CD8-positive, alpha-beta T cell (primary cell): ENCODE measurements at regions of chr9 and their contacts with region 1.

Region 1: DNA sequence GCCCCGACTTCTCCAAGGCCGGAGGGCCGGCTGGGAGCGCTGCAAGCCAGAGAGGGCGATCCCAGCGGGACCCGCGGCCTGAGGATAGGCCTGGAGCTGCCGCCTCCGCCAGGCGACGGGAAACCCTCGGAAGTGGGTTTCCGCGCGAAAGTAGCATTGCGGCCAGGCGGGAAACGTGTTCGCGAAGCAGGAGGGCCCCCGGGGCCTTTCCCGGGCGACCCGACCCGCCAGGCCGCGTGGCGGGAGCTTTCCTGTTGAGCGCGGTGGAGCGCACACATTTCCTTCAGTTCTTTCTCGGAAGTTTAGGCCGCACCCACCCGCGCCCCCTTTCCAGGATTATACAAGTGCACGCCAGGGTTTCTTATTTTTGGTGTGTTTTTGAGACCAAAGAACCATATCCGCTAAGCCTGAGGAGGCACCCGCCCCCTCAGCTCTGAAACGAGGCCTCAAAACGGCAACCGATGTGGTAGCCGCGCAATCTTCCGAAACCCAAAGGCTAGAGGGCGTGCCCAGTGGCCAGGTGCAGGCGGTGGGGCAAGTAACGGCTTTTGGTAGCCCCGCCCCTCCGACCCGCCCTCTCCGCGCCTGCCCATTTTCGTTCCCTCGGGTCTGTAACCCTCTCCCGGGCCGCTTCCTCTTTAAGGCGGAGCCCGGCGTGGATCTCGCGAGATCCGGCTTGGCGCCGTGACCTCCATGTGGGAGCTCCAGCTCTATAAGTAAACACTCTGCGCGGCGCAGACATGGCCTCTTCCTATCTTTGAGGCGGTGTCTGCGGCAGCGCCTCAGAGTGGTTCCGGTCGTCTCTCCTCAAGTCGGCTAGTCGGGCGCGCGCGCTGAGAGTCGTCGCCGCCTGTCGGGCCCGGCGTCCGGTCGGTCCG is at the start of gene UHRF2:
- DNase-seq: peak; percentile 98 to 99 (median 99)
- ATAC-seq: peak; percentile 88
- H3K4me3 ChIP-seq: peak within 1 kb of the TSS; percentile 58 to 74
- H3K4me3 Mint-ChIP-seq: peak within 1 kb of the TSS; percentile 87
- H3K27ac ChIP-seq: peak within 1 kb of the TSS; percentile 80 to 83
- H3K27ac Mint-ChIP-seq: peak within 1 kb of the TSS; percentile 93
- H3K4me1 ChIP-seq: peaks cover 28% of the 10 kb centered on the region
- H3K4me1 Mint-ChIP-seq: peaks cover 34% of the 10 kb centered on the region
- H3K27me3 ChIP-seq: no peaks in the 10 kb centered on the region
- H3K27me3 Mint-ChIP-seq: no peaks in the 10 kb centered on the region
- CTCF ChIP-seq: no peak
- total RNA-seq, gene UHRF2: 140 to 159 TPM

Region 2: DNA sequence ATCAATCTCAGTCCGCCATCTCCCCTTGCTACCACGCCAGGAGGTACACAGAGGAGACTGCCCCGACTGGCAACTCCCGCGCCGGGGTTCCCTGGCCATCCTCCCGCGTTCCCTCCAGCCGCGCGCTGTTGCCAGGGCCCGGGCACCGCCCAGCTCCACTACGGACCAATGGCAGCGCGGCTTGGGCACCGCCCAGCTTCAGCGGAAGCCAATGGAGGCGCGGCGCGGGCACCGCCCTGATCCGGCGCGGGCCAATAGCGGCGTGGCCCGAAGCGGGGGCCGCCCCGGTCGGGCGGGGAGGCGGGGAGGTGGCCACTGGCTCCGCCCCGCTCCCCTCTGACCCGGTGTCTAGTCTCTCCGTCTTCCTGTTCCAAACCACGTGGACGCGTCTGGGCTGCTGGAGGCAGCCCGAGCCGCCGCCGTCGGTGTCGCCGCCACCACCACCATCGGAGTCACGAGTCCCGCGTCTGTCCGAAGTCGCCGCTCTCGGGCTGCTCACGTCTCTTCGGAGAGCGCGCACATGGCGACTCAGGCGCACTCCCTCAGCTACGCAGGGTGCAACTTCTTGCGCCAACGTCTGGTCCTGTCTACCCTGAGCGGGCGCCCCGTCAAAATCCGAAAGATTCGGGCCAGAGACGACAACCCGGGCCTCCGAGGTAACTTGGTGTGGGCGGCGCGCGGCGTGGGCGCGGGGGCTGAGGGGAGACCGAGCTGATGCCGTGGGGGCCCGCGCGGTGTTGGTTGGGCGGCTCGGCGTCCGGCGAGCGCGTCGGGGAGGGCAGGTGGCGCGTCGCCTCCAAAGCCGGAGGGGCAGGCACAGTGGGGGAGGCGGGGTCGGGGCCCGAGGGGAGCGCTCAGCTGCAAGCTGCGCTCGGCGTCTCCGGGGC is 1619.9 kb before region 1 on chr9 and contains the start of gene RCL1:
- CTCF ChIA-PET with region 1: no interaction called
- POLR2A ChIA-PET with region 1: interaction called, 3 read pairs
- intact Hi-C with region 1: loop called in 1 of 2 experiments (anchors 5 kb)
- DNase-seq: peak; percentile 92 to 98 (median 95)
- ATAC-seq: peak; percentile 90
- H3K4me3 ChIP-seq: peak within 1 kb of the TSS; percentile 92 to 98
- H3K4me3 Mint-ChIP-seq: peak within 1 kb of the TSS; percentile 95
- H3K27ac ChIP-seq: peak within 1 kb of the TSS; percentile 90 to 92
- H3K27ac Mint-ChIP-seq: peak within 1 kb of the TSS; percentile 96
- H3K4me1 ChIP-seq: peaks cover 30% of the 10 kb centered on the region
- H3K4me1 Mint-ChIP-seq: peaks cover 47% of the 10 kb centered on the region
- H3K27me3 ChIP-seq: no peaks in the 10 kb centered on the region
- H3K27me3 Mint-ChIP-seq: no peaks in the 10 kb centered on the region
- CTCF ChIP-seq: no peak
- total RNA-seq, gene RCL1: 30.8 to 35.0 TPM

Region 3: DNA sequence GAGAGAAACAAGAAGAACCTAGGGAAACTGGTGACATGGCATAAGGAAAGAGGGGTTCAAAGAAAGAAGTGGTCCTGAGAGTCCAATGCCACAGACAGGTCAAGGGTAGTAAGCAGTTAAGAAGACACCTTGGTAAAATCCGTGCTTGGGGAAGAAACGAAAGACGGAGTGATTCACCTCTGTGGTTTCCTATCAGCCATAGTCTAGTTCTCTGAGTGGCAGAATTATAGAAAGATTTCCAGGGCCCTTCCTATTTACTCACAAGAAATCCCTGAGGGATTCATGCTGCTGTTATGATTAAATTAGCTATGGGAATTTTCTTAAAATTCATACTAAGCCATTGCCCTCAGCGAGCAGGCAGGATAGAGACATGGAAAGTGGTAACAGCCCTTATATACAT is 165.5 kb before region 1 on chr9:
- CTCF ChIA-PET with region 1: no interaction called
- POLR2A ChIA-PET with region 1: no interaction called
- intact Hi-C with region 1: no loop called
- DNase-seq: no peak
- ATAC-seq: no peak
- H3K4me3 ChIP-seq: no peak overlapping the region
- H3K4me3 Mint-ChIP-seq: no peak overlapping the region
- H3K27ac ChIP-seq: no peak overlapping the region
- H3K27ac Mint-ChIP-seq: no peak overlapping the region
- H3K4me1 ChIP-seq: no peaks in the 10 kb centered on the region
- H3K4me1 Mint-ChIP-seq: no peaks in the 10 kb centered on the region
- H3K27me3 ChIP-seq: no peaks in the 10 kb centered on the region
- H3K27me3 Mint-ChIP-seq: peaks cover 9% of the 10 kb centered on the region
- CTCF ChIP-seq: no peak

Region 4: GRCh38 chr9:6353851-6354686 is 58.7 kb before region 1 on chr9:
- CTCF ChIA-PET with region 1: interaction called, 9 read pairs
- POLR2A ChIA-PET with region 1: no interaction called
- intact Hi-C with region 1: loop called in 1 of 2 experiments (anchors 5 kb)
- DNase-seq: peak in 7 of 9 experiments; percentile 6 to 75 (median 28)
- ATAC-seq: peak; percentile 86
- H3K4me3 ChIP-seq: no peak overlapping the region
- H3K4me3 Mint-ChIP-seq: no peak overlapping the region
- H3K27ac ChIP-seq: no peak overlapping the region
- H3K27ac Mint-ChIP-seq: no peak overlapping the region
- H3K4me1 ChIP-seq: no peaks in the 10 kb centered on the region
- H3K4me1 Mint-ChIP-seq: no peaks in the 10 kb centered on the region
- H3K27me3 ChIP-seq: peaks cover 0 to 3% of the 10 kb centered on the region in 2 experiments
- H3K27me3 Mint-ChIP-seq: peaks cover 8% of the 10 kb centered on the region
- CTCF ChIP-seq: peak; percentile 91

Region 5: DNA sequence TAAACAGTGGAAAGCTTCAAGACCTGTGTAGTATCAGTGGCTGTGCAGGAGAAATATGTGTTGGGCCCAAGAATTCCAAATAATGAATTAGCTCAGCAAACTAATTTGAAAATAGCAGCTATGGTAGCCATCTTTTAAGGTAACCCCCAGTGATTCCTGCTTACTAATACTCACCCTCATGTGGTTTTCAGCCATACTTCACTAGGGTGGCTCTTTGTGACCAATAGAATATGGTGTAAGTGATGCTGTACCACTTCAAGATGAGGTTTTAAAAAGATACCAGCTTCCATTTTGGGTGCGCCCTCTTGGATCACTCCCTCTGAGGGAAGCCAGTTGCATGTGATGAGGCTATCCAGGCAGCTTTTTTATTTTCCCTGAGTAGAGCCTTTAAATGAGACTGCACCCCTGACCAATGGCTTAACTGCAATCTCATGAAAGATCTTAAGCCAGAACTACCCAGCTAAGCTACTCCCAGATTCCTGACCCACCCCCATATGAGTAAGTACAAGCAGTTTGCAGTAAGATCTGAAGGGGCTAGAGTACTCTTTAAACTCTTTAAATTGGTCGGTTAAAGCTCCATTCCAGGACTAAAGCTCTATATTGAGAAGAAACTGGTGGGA is 58.6 kb after region 1 on chr9:
- CTCF ChIA-PET with region 1: no interaction called
- POLR2A ChIA-PET with region 1: no interaction called
- intact Hi-C with region 1: loop called (anchors 5 kb)
- DNase-seq: no peak
- ATAC-seq: no peak
- H3K4me3 ChIP-seq: no peak overlapping the region
- H3K4me3 Mint-ChIP-seq: no peak overlapping the region
- H3K27ac ChIP-seq: no peak overlapping the region
- H3K27ac Mint-ChIP-seq: peak overlapping the region; percentile 55
- H3K4me1 ChIP-seq: no peaks in the 10 kb centered on the region
- H3K4me1 Mint-ChIP-seq: peaks cover 29% of the 10 kb centered on the region
- H3K27me3 ChIP-seq: no peaks in the 10 kb centered on the region
- H3K27me3 Mint-ChIP-seq: no peaks in the 10 kb centered on the region
- CTCF ChIP-seq: no peak

Region 6: GRCh38 chr9:6703898-6704639 is 291.3 kb after region 1 on chr9:
- CTCF ChIA-PET with region 1: no interaction called
- POLR2A ChIA-PET with region 1: interaction called, 12 read pairs
- intact Hi-C with region 1: no loop called
- DNase-seq: peak; percentile 61 to 94 (median 86)
- ATAC-seq: peak; percentile 82
- H3K4me3 ChIP-seq: peak overlapping the region; percentile 80 to 99
- H3K4me3 Mint-ChIP-seq: peak overlapping the region; percentile 100
- H3K27ac ChIP-seq: peak overlapping the region; percentile 94 to 96
- H3K27ac Mint-ChIP-seq: peak overlapping the region; percentile 100
- H3K4me1 ChIP-seq: peaks cover 10% of the 10 kb centered on the region
- H3K4me1 Mint-ChIP-seq: peaks cover 13% of the 10 kb centered on the region
- H3K27me3 ChIP-seq: no peaks in the 10 kb centered on the region
- H3K27me3 Mint-ChIP-seq: no peaks in the 10 kb centered on the region
- CTCF ChIP-seq: no peak

Region 7: DNA sequence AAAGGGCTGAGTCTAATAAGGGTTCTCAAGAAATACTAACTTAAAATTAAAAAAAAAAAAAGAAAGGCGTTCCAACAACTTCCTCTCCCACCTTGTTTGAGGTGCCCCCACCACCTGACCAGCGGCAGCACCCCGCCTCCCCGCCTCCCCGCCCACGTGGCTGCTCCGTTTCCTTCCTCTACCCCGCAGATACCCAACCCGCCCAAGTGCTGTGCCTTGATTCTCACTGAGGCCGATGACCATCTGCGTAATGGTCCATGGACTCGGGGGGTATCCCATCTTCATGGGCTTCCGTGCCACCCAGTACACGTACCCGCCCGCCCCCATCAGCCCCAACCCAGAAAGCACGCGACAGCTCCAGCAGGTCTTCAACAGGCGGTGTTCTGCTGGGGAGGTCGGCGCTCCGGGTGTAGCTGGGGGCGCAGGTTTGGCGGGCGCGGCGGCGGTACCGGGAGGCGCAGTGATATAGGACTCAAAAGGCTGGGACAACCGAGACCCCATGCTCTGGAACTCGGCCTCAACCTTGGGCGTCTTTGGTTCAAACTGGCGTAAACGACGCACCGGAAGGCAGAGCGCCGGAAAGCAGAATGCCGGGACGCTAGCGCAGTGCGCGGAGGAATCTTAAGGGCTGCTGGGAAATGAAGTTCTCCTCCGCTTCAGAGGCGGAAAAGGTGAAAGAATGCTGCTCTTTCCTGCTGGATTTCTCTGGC is 1386.7 kb after region 1 on chr9 and contains the start of gene DMAC1:
- CTCF ChIA-PET with region 1: no interaction called
- POLR2A ChIA-PET with region 1: no interaction called
- intact Hi-C with region 1: loop called in 1 of 2 experiments (anchors 5 kb)
- DNase-seq: peak; percentile 44 to 87 (median 75)
- ATAC-seq: peak; percentile 90
- H3K4me3 ChIP-seq: peak within 1 kb of the TSS; percentile 89 to 100
- H3K4me3 Mint-ChIP-seq: peak within 1 kb of the TSS; percentile 95
- H3K27ac ChIP-seq: peak within 1 kb of the TSS; percentile 88 to 89
- H3K27ac Mint-ChIP-seq: peak within 1 kb of the TSS; percentile 97
- H3K4me1 ChIP-seq: peaks cover 16% of the 10 kb centered on the region
- H3K4me1 Mint-ChIP-seq: peaks cover 40% of the 10 kb centered on the region
- H3K27me3 ChIP-seq: no peaks in the 10 kb centered on the region
- H3K27me3 Mint-ChIP-seq: no peaks in the 10 kb centered on the region
- CTCF ChIP-seq: no peak
- total RNA-seq, gene DMAC1: 8.6 to 10.6 TPM